ENCODE measurements at regions of chr1 and their contacts with region 1.

Region 1: DNA sequence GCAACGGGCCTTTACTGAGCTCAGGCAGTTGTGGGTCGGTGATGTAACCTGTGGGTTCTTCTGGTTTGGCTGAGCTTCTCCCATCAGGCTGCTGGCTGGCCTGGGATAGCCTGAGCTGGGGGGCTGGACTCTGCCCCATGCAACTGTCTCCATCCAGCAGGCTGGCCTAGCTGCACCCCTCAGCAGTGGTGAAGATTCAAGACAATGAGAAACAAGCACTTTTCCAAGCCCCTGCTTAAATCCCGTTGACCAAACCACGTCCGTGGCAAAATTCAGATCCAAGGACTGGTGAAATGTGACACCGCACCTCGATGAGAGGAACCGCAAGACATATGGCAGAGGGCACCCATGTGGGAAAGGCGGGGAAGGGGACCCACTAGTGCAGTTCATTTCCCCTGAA is 25.6 kb downstream of the PRSS38 start:
- H3K4me3 ChIP-seq: no peak overlapping the region
- H3K27ac ChIP-seq: no peak overlapping the region
- H3K4me1 ChIP-seq: no peaks in the 10 kb centered on the region
- CTCF ChIP-seq: no peak

Region 2: GRCh38 chr1:227864882-227865281 is 23.8 kb after region 1 on chr1:
- CTCF ChIA-PET with region 1: interaction called, 10 read pairs
- POLR2A ChIA-PET with region 1: no interaction called
- H3K4me3 ChIP-seq: no peak overlapping the region
- H3K27ac ChIP-seq: no peak overlapping the region
- H3K4me1 ChIP-seq: no peaks in the 10 kb centered on the region
- CTCF ChIP-seq: no peak

Region 3: DNA sequence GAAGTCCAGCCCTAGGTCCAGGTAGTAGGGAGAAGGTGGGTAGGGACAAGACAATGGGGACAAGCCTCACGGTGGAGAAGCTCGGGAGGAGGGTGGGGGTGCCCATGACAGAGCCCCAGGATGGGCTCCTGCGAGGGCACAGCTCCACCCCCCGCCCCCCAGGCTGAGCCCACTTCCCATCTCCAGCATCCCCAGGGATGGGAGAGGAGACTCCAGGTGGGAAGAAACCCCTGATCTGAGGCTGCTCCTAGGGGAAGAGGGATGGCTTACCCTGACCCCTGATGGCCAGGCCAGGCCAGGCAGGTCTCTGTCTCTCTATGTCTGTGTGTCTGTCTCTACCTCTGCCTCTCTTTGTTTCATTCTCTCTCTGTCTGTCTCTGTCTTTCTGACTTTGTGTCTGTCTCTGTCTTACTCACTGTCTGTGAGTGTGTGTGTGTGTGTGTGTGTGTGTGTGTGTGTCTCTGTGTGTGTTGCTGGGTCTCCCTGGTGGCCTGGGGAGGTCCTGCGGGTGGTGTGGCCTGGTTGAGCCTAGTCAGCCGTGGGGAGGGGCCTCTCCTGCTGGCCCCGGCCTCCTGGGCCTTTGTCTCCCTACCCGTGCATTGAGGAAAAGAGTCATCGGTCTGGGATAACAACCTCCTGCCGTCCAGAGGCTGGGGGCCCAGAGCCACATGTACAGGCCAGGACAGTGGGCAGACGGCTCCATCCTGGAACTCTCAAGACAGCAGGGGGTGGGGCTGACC is 61.0 kb after region 1 on chr1:
- CTCF ChIA-PET with region 1: no interaction called
- POLR2A ChIA-PET with region 1: no interaction called
- H3K4me3 ChIP-seq: no peak overlapping the region
- H3K27ac ChIP-seq: no peak overlapping the region
- H3K4me1 ChIP-seq: no peaks in the 10 kb centered on the region
- CTCF ChIP-seq: peak; percentile 99

Measured in HEK293 (cell line).